ENCODE measurements at regions of chr1 and their contacts with region 1.

Region 1: DNA sequence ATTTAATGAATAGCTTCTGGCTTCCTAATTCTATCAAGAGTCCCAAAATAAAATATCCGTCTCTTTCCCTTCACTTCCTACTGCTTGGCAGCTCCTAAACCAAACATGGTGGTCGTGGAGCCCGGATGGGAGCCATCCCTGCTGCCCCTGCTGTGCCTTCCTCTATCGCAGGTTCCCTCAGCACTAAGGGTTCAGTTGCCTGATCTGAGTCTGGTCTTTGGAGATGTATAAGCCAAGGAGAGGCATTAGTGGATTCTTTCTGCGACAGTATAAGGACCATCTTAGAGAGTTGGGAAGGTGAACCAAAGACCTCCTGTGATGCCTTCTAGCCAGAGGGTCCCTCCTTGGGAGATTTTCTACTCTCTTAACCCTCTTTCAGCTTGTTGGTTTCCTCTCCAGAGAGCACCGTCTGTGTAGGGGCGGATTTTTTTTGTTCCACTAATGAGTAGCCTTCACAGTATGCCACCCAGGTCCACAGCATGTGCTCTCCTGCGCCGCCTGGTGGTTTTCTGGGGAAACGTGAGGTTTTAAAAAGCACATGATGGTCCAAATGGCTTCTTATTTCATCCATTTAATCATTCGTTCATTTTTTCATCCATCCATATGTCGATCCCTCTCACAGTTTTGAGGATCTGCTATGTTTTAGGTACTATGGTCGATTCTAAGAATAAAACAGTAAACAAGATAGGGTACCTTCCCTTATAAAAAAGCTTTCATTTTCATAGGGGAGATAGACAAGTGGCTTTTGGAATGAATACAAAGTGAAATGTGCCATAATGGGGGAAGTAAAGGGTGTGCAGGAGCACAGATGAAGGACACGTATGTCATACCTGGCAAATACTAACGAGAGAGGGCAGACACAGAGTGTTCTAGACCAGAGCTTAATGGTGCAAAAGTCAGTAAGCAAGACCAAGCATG is 71.0 kb downstream of the NFASC start:
- DNase-seq: peak; percentile 35
- ATAC-seq: peak; percentile 54
- H3K4me3 Mint-ChIP-seq: no peak overlapping the region
- H3K27ac Mint-ChIP-seq: no peak overlapping the region
- H3K4me1 Mint-ChIP-seq: no peaks in the 10 kb centered on the region
- H3K27me3 Mint-ChIP-seq: peaks cover 5% of the 10 kb centered on the region
- CTCF ChIP-seq: peak; percentile 41

Region 2: GRCh38 chr1:204377795-204378608 is 563.7 kb before region 1 on chr1:
- CTCF ChIA-PET with region 1: no interaction called
- POLR2A ChIA-PET with region 1: no interaction called
- intact Hi-C with region 1: no loop called
- DNase-seq: peak; percentile 33
- ATAC-seq: peak; percentile 79
- H3K4me3 Mint-ChIP-seq: peak overlapping the region; percentile 79
- H3K27ac Mint-ChIP-seq: no peak overlapping the region
- H3K4me1 Mint-ChIP-seq: peaks cover 13% of the 10 kb centered on the region
- H3K27me3 Mint-ChIP-seq: peaks cover 17% of the 10 kb centered on the region
- CTCF ChIP-seq: no peak

Region 3: GRCh38 chr1:204826970-204827369 is 114.7 kb before region 1 on chr1:
- CTCF ChIA-PET with region 1: no interaction called
- POLR2A ChIA-PET with region 1: no interaction called
- intact Hi-C with region 1: loop called (anchors 1 kb)
- DNase-seq: no peak
- ATAC-seq: no peak
- H3K4me3 Mint-ChIP-seq: no peak overlapping the region
- H3K27ac Mint-ChIP-seq: no peak overlapping the region
- H3K4me1 Mint-ChIP-seq: peaks cover 8% of the 10 kb centered on the region
- H3K27me3 Mint-ChIP-seq: peaks cover 49% of the 10 kb centered on the region
- CTCF ChIP-seq: no peak

Region 4: GRCh38 chr1:204962742-204963632 is 21.3 kb after region 1 on chr1:
- CTCF ChIA-PET with region 1: no interaction called
- POLR2A ChIA-PET with region 1: no interaction called
- intact Hi-C with region 1: loop called (anchors 1 kb)
- DNase-seq: no peak
- ATAC-seq: peak; percentile 92
- H3K4me3 Mint-ChIP-seq: peak overlapping the region; percentile 60
- H3K27ac Mint-ChIP-seq: peak overlapping the region; percentile 37
- H3K4me1 Mint-ChIP-seq: peaks cover 22% of the 10 kb centered on the region
- H3K27me3 Mint-ChIP-seq: peaks cover 14% of the 10 kb centered on the region
- CTCF ChIP-seq: no peak

Region 5: GRCh38 chr1:205391386-205391785 is 449.7 kb after region 1 on chr1:
- CTCF ChIA-PET with region 1: no interaction called
- POLR2A ChIA-PET with region 1: no interaction called
- intact Hi-C with region 1: no loop called
- DNase-seq: no peak
- ATAC-seq: no peak
- H3K4me3 Mint-ChIP-seq: no peak overlapping the region
- H3K27ac Mint-ChIP-seq: no peak overlapping the region
- H3K4me1 Mint-ChIP-seq: no peaks in the 10 kb centered on the region
- H3K27me3 Mint-ChIP-seq: peaks cover 27% of the 10 kb centered on the region
- CTCF ChIP-seq: no peak